Sigmoid colon (tissue), 7 donors: ENCODE measurements at regions of chr22 and their contacts with region 1.

Region 1: DNA sequence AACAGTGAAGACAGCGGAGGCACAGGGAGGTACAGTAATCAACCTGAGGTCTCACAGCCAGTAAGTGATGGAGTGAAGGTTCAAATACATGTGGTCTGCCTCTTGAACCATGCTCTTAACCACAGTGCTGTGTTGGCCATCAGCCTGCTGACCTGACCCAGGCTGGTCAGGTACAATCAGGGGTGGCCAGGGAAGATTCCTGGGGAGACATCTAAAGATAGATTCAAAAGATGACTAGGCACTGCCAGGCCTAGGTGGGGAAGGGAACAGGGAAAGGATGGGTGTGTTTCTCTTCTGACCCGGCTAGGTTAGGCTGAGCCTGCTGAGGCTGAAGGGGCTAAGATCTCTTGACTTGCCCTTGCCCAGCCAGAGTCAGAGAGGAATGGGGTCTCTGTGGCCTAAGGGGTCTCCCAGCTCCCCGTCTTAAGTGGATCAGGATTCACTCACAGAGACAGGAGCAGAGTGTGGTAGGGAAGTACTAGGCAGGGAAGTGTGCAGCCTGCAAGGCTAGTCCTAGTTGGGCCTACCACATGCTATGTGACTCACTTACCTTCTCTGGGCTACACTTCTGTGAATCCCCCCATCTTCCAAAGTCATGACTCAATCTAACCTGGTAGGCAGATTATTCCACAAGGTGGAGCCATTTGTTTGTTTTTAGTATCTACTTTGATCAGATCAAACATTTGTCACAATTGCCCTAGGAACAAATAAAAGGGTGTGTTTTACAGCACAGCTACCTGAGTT is 10.4 kb upstream of the SREBF2 start:
- DNase-seq: no peak
- H3K4me3 ChIP-seq: no peak overlapping the region
- H3K27ac ChIP-seq: no peak overlapping the region
- H3K4me1 ChIP-seq: peaks cover 0 to 8% (median 0%) of the 10 kb centered on the region in 4 donors
- H3K27me3 ChIP-seq: no peaks in the 10 kb centered on the region
- CTCF ChIP-seq: peak in 2 of 4 experiments; percentile 39 to 62
- EP300 ChIP-seq: no peak
- POLR2A ChIP-seq: no peak

Region 2: DNA sequence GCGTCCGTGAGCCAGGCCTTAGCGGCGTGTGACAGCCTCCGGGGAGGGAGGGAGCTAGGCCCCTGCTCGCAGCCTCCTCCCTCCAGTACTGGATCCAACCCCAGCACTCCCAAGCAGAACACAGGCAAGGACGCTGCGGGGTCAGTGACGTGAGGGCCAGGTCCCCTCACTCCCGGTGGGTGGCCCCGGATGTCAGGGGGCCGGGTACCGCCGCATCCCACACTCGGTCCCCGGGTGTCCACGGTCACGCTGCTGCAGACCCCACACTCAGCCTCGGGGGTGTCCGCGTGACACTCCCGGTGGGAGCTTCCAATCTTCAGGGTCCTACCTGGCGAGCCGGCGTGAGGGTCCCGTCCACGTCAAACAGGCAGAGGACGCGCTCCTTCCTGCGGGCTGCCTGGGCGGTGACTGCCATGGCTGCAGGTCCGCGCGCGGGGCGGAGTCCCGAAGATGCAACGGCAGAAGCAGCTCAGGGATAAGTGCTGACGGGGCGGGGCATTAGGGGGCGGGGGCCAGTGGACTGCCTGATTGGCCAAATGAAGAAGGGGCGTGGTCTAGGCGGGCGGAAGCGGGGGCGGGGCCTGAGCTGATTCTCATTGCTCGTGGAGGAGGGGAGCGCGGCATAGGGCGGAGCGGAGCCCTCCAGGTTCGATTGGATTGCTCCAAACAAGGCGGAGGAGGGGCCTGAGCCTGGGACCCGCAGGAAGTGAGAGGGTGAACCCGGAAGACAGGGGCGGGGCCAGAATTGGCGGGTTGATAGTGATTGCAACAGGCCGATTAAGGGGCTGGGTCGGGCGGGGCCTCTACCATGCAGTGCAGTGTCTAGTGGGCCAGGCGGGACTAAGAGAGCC is 232.9 kb before region 1 on chr22 and contains the start of gene PMM1:
- intact Hi-C with region 1: no loop called
- DNase-seq: peak; percentile 100
- H3K4me3 ChIP-seq: peak within 1 kb of the TSS; percentile 77 to 96 (median 84)
- H3K27ac ChIP-seq: peak within 1 kb of the TSS; percentile 83 to 88 (median 86)
- H3K4me1 ChIP-seq: peaks cover 0 to 24% (median 17%) of the 10 kb centered on the region in 4 donors
- H3K27me3 ChIP-seq: no peaks in the 10 kb centered on the region
- CTCF ChIP-seq: no peak
- EP300 ChIP-seq: no peak
- POLR2A ChIP-seq: peak; percentile 95 to 97
- total RNA-seq, gene PMM1: 35.0 to 58.9 (median 43.6) TPM

Region 3: DNA sequence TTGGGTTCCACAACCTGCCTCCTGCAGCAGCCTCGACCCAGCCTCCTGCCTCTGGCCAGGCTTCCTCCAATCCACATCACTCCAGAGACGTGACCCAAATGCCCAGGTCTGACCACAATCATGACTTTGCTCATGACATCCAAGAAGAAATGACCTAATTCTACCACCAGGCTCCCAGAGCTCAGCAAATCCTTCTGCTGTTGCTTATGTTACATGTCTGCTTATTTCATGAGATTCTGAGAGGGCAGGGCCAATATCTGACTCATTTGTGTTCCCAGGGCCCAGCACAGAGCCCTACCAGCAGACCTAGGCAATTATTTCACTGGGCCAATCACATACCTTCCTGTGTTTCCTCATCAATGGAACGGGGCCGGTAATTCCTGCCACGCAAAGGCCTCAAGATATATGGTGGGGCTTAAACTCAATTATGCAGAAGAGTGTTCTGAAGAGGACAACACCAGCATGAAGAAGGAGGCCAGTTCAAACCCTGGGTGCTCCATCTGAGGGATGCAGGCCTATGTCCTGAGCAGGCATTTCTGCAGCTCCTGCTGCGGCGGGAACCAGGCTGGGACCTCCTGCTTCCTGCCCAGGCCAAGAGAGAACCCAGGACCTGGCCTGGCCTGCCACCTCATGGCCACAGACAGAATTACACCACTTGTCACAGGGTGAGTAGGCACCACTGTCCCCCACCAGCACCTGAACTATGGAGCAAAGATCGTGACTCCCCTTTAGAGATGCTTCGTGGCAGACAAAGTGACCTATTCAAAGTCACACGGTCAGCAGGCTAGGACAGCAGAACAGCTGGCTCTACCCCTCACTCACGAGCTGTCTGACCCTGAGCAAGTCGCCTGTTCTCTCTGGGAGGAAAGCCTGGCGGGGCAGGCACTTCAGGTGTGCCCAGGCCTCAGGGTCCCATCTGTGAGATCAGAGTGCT is 118.6 kb after region 1 on chr22:
- intact Hi-C with region 1: loop called (anchors 2 kb)
- DNase-seq: peak; percentile 91
- H3K4me3 ChIP-seq: no peak overlapping the region
- H3K27ac ChIP-seq: peak overlapping the region; percentile 20 to 67 (median 42)
- H3K4me1 ChIP-seq: peaks cover 0 to 22% (median 17%) of the 10 kb centered on the region in 4 donors
- H3K27me3 ChIP-seq: no peaks in the 10 kb centered on the region
- CTCF ChIP-seq: peak; percentile 90 to 98 (median 94)
- EP300 ChIP-seq: no peak
- POLR2A ChIP-seq: no peak